B cell (primary cell): ENCODE measurements at regions of chr15 and their contacts with region 1.

Region 1: GRCh38 chr15:40525855-40526254 is 39.0 kb downstream of the CCDC32 start:
- DNase-seq: no peak
- ATAC-seq: no peak
- H3K4me3 ChIP-seq: no peak overlapping the region
- H3K4me3 Mint-ChIP-seq: no peak overlapping the region
- H3K27ac ChIP-seq: no peak overlapping the region
- H3K27ac Mint-ChIP-seq: no peak overlapping the region
- H3K4me1 ChIP-seq: no peaks in the 10 kb centered on the region
- H3K4me1 Mint-ChIP-seq: peaks cover 2% of the 10 kb centered on the region
- H3K27me3 ChIP-seq: no peaks in the 10 kb centered on the region
- H3K27me3 Mint-ChIP-seq: no peaks in the 10 kb centered on the region
- CTCF ChIP-seq: no peak

Region 2: DNA sequence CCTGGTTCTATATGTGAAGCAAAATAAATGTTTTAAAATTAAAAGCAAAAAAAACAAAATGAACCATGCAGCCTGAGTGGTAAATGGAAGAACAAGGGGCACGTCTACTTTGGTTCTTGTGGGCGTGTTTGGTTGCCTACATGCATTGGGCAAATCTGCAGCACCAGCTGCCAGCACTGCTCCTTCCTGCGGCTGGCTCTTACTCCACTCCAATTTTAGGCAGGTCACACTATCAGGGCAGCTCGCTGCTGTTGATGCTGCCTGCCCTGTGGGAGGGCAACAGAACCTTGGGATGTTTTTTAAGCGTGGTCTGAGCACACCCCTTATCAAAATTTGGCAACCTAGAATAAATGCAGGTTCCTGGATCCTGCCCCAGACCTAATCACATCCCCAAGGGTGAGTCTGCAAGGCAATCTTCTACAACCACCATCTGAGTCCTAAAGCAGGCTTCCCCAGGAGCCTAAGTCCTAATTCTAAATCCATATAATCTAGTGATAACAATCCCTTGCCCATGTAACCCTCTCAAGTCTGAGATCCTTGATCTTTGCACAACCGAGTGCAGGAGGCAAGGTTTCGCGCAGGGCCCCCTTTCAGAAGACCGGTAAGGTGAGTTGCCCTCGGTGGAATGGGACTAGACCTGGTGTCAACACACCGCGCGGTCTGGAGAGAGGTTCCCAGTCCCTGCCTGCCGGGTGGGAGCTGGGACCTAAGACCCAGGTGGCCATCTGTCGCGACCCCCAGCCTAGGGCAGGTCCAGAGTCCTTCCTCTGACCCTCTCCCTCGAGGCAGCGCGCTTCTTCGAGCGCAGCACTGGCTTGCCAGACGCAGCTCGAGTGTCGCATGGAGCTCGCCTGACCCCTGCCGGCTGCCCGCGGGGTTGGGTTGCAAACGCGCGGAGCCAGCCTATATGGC is 104.4 kb before region 1 on chr15:
- CTCF ChIA-PET with region 1: no interaction called
- POLR2A ChIA-PET with region 1: no interaction called
- intact Hi-C with region 1: no loop called
- DNase-seq: peak; percentile 83
- ATAC-seq: peak; percentile 96
- H3K4me3 ChIP-seq: no peak overlapping the region
- H3K4me3 Mint-ChIP-seq: no peak overlapping the region
- H3K27ac ChIP-seq: no peak overlapping the region
- H3K27ac Mint-ChIP-seq: no peak overlapping the region
- H3K4me1 ChIP-seq: peaks cover 4 to 7% of the 10 kb centered on the region in 2 donors
- H3K4me1 Mint-ChIP-seq: peaks cover 2% of the 10 kb centered on the region
- H3K27me3 ChIP-seq: no peaks in the 10 kb centered on the region
- H3K27me3 Mint-ChIP-seq: no peaks in the 10 kb centered on the region
- CTCF ChIP-seq: peak; percentile 97

Region 3: GRCh38 chr15:40536501-40536900 is 10.6 kb after region 1 on chr15:
- CTCF ChIA-PET with region 1: interaction called, 12 read pairs
- POLR2A ChIA-PET with region 1: no interaction called
- intact Hi-C with region 1: no loop called
- DNase-seq: no peak
- ATAC-seq: no peak
- H3K4me3 ChIP-seq: no peak overlapping the region
- H3K4me3 Mint-ChIP-seq: no peak overlapping the region
- H3K27ac ChIP-seq: no peak overlapping the region
- H3K27ac Mint-ChIP-seq: no peak overlapping the region
- H3K4me1 ChIP-seq: peaks cover 8 to 11% of the 10 kb centered on the region in 2 donors
- H3K4me1 Mint-ChIP-seq: peaks cover 17% of the 10 kb centered on the region
- H3K27me3 ChIP-seq: no peaks in the 10 kb centered on the region
- H3K27me3 Mint-ChIP-seq: no peaks in the 10 kb centered on the region
- CTCF ChIP-seq: no peak